Activated T-helper 2 cell treated with anti-CD3 and anti-CD28 coated beads, Interferon-gamma antibody, Interleukin-2, Interleukin-4, amounts not matched to agents 10 μg/mL and 5 μg/mL and 100 μg/mL, durations not matched to agents 14 hours and 24 hours and 36 hours (primary cell): ENCODE measurements at regions of chr6 and their contacts with region 1.

Region 1: GRCh38 chr6:30396833-30397479 is 52.0 kb downstream of the RPP21 start:
- DNase-seq: peak; percentile 73
- H3K4me3 Mint-ChIP-seq: no peak overlapping the region
- H3K27ac Mint-ChIP-seq: no peak overlapping the region
- H3K4me1 Mint-ChIP-seq: peaks cover 4% of the 10 kb centered on the region
- H3K27me3 Mint-ChIP-seq: peaks cover 53% of the 10 kb centered on the region

Region 2: DNA sequence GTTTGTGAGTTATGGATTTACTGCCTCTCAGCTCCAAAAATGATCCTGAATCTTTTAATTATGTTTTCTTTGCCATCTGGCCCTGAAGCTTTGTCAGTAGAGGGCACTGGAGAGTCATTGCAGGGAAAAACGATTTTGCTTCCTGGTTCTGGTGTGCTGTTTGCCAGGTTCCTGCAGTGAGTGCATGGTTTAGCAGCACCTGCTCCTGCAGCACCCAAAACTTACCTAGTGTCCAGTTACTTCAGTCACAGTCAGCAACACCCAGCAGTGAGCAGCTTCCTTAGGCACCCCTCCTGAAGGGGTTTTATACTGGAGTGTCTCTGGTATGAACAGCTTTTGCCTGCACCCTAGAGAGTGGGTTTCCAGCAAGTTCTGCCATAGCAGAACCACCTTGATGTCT is 177.7 kb before region 1 on chr6:
- intact Hi-C with region 1: loop called (anchors 1 kb)
- DNase-seq: peak; percentile 36
- H3K4me3 Mint-ChIP-seq: no peak overlapping the region
- H3K27ac Mint-ChIP-seq: no peak overlapping the region
- H3K4me1 Mint-ChIP-seq: peaks cover 14% of the 10 kb centered on the region
- H3K27me3 Mint-ChIP-seq: no peaks in the 10 kb centered on the region

Region 3: DNA sequence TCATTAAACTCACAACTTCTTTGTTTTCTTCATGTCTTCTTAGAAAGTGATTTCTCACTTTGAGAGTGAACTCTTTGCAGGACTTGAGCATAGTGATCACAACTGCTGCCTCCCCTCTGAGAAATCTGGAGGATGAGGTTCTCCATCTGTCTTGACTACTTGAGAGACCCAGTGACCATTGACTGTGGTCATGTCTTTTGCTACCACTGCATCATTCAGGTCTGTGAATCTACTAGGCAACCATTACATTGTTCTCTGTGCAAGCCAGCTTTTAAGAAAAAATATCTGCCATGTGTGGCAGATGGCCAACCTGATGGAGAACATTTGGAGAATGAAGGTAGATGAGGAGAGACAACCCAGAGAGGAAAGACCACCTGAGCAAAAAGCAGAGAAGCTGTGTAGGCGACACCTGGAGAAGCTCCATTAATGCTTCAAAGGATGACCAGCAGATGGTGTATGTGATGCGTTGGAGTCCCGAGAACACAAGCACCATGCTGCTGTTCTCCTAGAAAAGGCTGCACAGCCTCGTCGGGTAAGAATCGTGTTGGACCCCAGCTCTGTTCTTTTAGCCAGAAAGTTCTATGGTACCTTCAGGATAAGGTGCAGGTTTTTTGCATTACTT is 158.7 kb before region 1 on chr6:
- intact Hi-C with region 1: loop called (anchors 1 kb)
- DNase-seq: no peak
- H3K4me3 Mint-ChIP-seq: no peak overlapping the region
- H3K27ac Mint-ChIP-seq: no peak overlapping the region
- H3K4me1 Mint-ChIP-seq: no peaks in the 10 kb centered on the region
- H3K27me3 Mint-ChIP-seq: peaks cover 32% of the 10 kb centered on the region

Region 4: GRCh38 chr6:30357678-30358540 is 39.0 kb before region 1 on chr6:
- intact Hi-C with region 1: loop called (anchors 2 kb)
- DNase-seq: peak; percentile 22
- H3K4me3 Mint-ChIP-seq: peak overlapping the region; percentile 77
- H3K27ac Mint-ChIP-seq: no peak overlapping the region
- H3K4me1 Mint-ChIP-seq: peaks cover 2% of the 10 kb centered on the region
- H3K27me3 Mint-ChIP-seq: peaks cover 80% of the 10 kb centered on the region